WTC11 (cell line): ENCODE measurements at regions of chr11 and their contacts with region 1.

Region 1: DNA sequence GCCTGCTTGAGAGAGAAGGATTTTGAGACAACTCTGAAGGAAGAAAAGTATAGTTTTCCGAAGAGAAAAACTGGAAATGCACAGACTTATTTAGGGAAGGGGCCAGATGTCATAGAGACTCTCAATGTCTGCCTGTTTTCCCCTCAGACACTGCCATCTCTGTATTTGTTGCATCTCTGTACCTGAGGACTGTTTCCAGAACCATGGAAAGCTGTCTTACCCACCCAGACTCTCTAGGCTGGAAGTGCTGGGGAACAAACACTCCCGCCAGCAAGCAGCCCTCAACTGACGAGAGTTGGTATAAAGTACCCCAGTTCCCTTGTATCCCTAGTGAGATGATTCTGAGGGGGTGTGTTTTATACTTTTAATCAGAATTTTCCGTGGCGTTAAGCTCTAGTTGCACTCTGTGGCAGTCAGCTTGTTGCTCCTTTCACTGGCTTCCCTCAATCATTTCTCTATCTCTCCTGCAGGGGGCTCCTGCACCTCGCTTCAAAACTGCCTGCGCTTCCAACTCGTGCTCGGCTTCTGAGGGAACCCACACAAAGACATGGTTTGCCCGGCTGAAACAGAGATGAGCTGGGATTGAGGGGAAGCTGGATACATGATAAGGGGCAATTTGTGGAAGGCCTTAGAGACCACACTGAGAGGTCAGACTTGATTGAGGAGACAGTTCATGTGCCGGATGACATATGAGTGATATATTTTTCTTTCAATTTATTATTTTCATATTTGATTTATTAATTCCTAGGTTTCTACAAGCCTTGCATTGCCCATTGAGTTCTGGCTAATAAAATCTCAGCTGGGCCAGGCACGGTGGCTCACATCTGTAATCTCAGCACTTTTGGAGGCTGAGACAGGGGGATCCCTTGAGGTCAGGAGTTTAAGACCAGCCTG is 36.9 kb upstream of the CLPB start:
- DNase-seq: peak; percentile 72
- ATAC-seq: peak; percentile 97
- H3K4me3 Mint-ChIP-seq: peak overlapping the region; percentile 27
- H3K27ac Mint-ChIP-seq: peak overlapping the region; percentile 28; the same call in 1 of the 2 replicates
- H3K4me1 Mint-ChIP-seq: peaks cover 7% of the 10 kb centered on the region
- H3K27me3 Mint-ChIP-seq: peaks cover 16% of the 10 kb centered on the region
- CTCF ChIP-seq: peak; percentile 58

Region 2: DNA sequence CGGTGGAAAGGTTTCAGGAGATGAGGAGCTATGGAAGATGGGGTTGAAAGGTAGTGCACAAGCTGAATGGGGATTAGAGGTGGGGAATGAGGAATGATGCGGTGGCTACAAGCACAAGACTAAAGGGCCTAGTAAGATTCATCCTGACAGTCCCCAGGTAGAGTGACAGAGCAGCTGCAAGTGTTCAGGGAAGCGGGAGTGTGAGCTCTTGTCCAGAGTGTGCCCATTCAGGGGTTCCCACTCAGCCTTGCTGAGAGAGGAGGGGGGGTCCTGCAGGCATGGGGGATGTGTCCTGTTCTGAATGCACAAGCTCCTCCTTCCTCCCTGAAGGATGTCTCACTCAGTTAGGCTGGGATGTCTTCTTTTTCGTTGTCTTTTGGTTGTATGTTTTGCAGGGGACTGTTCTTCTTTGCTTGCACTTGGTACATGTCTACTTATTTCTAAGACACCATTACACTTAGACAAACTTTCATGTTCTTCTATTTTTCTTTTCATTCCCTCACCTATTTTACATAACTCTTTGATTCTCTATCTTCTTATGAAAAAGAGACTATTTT is 11.1 kb before region 1 on chr11:
- CTCF ChIA-PET with region 1: interaction called, 141 read pairs
- POLR2A ChIA-PET with region 1: no interaction called
- DNase-seq: no peak
- ATAC-seq: no peak
- H3K4me3 Mint-ChIP-seq: no peak overlapping the region
- H3K27ac Mint-ChIP-seq: no peak overlapping the region
- H3K4me1 Mint-ChIP-seq: no peaks in the 10 kb centered on the region
- H3K27me3 Mint-ChIP-seq: peaks cover 13% of the 10 kb centered on the region
- CTCF ChIP-seq: no peak

Region 3: DNA sequence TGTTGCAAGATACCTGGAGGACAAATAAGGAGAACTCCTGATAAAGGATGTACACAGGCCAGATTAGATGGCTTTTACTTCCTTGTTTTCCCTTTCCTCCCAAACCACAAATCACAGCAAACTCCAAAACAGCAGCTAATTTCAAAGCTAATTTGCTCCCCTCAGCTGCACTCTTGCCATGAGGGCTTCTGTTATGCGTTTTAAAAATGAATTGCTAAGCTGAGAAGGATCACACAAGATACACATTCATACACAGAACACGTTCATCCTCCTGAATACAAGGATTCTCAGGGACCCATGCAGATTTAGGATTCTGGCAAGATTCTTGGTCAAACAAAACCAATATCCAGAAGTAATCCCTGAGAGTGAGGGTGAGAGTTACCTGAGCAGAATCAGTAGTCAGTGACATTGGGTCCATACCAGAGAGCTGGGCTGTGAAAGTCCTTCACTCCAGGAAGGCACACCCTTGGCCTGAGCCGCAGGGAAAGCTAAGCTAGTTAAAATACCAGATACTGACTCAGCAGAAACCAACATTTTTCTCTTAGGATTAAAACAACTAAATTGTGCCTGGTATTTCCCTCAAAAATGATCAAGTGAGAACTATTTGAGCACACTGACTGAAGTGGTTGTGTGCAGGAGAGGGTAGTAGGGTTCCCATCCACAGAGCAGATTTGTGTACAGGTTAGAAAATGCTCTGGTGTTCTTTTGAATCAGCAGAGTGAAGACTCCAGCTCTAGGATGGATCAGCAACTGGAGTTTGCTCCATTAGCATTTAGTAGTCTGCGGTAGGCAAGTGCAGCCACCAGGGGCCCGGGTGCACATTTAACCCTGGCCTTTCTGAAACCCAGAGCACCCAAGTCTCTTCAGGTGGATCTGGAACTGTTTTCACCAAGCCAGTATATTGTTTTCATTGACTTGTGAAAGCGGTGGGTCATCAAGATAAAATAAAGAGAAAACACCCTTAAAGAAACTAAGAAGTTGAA is 63.6 kb after region 1 on chr11:
- CTCF ChIA-PET with region 1: interaction called, 28 read pairs
- POLR2A ChIA-PET with region 1: no interaction called
- DNase-seq: peak; percentile 45
- ATAC-seq: peak; percentile 95
- H3K4me3 Mint-ChIP-seq: peak overlapping the region; percentile 7; the same call in 1 of the 2 replicates
- H3K27ac Mint-ChIP-seq: peak overlapping the region; percentile 75
- H3K4me1 Mint-ChIP-seq: peaks cover 28% of the 10 kb centered on the region
- H3K27me3 Mint-ChIP-seq: peaks cover 10% of the 10 kb centered on the region; the same call in 1 of the 2 replicates
- CTCF ChIP-seq: no peak

Region 4: GRCh38 chr11:72579816-72580641 is 108.8 kb after region 1 on chr11:
- CTCF ChIA-PET with region 1: interaction called, 144 read pairs
- POLR2A ChIA-PET with region 1: no interaction called
- DNase-seq: peak; percentile 4
- ATAC-seq: no peak
- H3K4me3 Mint-ChIP-seq: no peak overlapping the region
- H3K27ac Mint-ChIP-seq: no peak overlapping the region
- H3K4me1 Mint-ChIP-seq: peaks cover 8% of the 10 kb centered on the region
- H3K27me3 Mint-ChIP-seq: peaks cover 36% of the 10 kb centered on the region
- CTCF ChIP-seq: no peak

Region 5: DNA sequence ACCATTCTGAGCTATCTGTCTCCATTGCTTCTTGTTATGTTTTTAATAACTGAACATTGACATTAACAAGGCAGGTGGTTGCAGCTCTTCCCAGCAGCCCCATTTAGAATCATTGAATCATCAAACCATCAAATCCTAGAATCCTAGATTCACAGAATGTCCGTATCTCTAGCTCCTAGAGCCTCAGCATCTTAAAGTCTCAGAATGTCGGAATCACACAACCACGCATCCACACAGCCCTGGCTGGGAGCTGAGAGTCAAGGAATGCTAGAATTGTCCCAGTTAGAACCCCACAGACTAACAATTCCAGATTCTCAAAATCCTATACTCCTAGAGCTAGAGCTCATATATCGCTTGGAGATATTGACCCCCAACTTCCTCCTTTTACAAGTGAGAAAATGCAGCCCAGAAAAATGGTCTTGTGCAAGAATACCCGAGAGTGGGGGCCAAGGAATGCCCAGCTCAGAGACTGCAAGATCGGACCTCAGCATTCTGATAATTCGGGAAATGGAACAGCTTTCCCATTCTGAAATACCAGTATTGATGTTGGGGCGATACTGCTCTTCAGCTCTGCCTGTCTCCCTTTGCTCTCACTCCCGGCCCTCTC is 164.2 kb after region 1 on chr11:
- CTCF ChIA-PET with region 1: interaction called, 33 read pairs
- POLR2A ChIA-PET with region 1: no interaction called
- DNase-seq: no peak
- ATAC-seq: no peak
- H3K4me3 Mint-ChIP-seq: no peak overlapping the region
- H3K27ac Mint-ChIP-seq: no peak overlapping the region
- H3K4me1 Mint-ChIP-seq: peaks cover 38% of the 10 kb centered on the region
- H3K27me3 Mint-ChIP-seq: peaks cover 5% of the 10 kb centered on the region
- CTCF ChIP-seq: no peak

Region 6: DNA sequence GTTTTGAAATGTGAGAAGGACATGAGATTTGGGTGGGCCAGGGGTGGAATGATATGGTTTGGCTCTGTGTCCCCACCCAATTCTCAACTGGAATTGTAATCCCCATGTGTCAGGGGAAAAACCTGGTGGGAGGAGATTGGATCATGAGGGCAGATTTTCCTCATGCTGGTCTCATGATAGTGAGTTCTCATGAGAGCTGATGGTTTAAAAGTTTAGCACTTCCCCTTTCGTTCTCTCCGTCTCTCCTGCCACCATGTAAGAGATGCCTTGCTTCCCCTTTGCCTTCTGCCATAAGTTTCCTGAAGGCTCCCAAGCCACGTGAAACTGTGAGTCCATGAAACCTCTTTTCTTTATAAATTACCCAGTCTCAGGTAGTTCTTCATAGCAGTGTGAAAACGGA is 557.4 kb after region 1 on chr11:
- CTCF ChIA-PET with region 1: no interaction called
- POLR2A ChIA-PET with region 1: no interaction called
- DNase-seq: no peak
- ATAC-seq: no peak
- H3K4me3 Mint-ChIP-seq: no peak overlapping the region
- H3K27ac Mint-ChIP-seq: no peak overlapping the region
- H3K4me1 Mint-ChIP-seq: peaks cover 12% of the 10 kb centered on the region
- H3K27me3 Mint-ChIP-seq: peaks cover 7% of the 10 kb centered on the region; the same call in 1 of the 2 replicates
- CTCF ChIP-seq: no peak